Activated CD8-positive, alpha-beta memory T cell treated with anti-CD3 and anti-CD28 coated beads, Interleukin-2, amount 10 ng/mL, durations not matched to agents 7 days and 5 days (primary cell): ENCODE measurements at regions of chr9 and their contacts with region 1.

Region 1: DNA sequence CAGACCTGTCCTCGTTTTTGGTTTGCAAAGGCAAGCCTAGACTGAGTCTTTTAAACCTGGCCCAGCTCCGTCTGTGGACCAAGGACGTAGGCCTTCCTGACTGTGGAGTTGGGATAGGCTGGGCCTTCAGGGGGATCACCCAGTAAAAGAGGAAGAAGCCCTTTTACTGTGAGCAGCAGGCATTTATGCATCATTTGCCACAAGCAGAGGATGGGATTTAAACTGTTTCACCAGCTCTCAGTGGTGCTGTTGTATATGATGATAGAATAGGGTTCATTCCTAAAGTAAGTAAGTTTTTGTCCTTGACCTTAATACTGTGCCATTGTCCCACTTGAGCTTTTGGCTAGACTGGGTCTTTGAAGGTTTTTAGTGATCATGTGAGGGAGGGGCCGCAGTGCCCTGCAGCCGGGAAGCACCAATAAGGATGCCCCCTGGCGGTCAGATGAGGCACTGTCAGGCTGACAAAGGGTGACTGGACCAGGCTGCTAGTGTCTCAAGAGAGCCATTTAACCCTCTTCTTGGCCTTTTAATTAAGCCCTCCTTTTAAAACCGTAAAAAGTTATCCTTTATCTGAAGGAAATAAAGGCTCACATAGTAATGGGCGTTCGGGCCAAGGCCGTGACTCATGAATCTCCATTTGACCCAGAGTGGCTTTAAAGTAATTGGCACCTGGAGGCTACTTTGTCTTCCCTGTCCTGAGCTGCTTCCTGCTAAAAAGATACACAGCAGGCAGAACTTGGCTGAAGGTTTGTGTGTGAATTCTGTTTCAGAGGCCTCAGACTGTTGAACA is 74.0 kb downstream of the UBAP1 start:
- DNase-seq: peak; percentile 73
- ATAC-seq: peak; percentile 80
- H3K4me3 Mint-ChIP-seq: no peak overlapping the region
- H3K27ac Mint-ChIP-seq: peak overlapping the region; percentile 57
- H3K4me1 Mint-ChIP-seq: no peaks in the 10 kb centered on the region
- H3K27me3 Mint-ChIP-seq: no peaks in the 10 kb centered on the region

Region 2: DNA sequence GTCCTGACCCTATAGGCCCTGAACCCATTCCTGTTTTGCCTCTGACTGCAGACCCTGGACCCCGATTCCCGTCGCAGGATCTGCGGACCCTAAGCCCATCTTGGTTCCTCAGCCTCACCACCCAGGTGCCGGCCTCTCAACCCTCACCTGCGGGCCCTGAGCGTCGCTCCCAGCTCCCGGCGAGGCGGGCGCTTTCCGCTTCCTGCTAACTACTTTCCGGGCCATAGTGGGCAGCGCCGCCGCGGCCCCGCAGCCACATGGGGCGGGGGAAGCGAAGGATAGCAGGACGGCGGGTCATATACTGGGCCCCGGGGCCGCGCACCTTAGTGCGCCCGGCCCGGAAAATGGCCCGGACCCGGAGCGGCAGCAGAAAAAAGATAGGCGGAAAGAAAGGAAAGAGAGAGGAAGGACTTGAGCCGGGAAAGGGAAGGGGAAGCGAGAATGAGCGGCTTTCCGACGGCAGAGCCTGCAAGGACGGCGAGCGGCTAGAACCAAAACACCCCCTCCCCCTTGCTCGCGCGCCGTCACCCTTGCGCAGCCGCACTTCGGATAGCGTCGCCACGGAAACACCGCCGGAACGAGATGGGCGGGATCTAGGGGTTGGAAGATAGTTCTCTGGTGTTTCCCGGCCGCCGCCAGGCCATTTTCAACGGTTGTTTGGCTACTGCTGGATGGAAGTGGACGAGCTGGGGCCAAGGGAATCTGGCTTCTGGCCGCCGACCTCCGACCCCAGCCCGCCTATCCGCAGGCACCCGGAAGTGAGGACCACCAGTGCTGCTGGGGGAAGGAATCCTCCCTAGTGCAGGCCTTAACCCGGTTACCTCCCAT is 126.4 kb before region 1 on chr9 and contains the start of gene DCAF12:
- CTCF ChIA-PET with region 1: interaction called, 17 read pairs
- DNase-seq: peak; percentile 94
- ATAC-seq: peak; percentile 93
- H3K4me3 Mint-ChIP-seq: peak within 1 kb of the TSS; percentile 99
- H3K27ac Mint-ChIP-seq: peak within 1 kb of the TSS; percentile 96
- H3K4me1 Mint-ChIP-seq: peaks cover 39% of the 10 kb centered on the region
- H3K27me3 Mint-ChIP-seq: no peaks in the 10 kb centered on the region
- total RNA-seq, gene DCAF12: 48.4 to 58.9 TPM

Region 3: DNA sequence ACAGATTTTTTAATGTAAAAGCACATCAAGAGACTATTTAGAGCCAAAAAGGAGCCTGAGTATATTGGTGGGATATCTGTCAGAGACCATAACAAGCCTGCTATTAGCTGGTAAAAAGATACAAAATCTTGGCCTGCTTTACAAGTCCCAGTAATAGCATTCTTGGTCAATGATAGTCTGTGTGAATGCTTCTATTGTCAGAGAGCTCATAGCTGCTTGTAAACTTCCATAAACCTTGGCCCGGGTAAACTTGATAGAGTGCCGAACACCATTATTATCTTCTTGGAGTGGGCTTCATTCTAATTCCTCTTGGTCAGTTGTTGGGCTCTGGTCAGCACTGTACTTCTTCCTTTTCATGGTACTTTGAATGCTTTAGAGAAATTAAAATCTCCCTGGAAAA is 10.0 kb before region 1 on chr9:
- CTCF ChIA-PET with region 1: interaction called, 12 read pairs
- DNase-seq: no peak
- ATAC-seq: no peak
- H3K4me3 Mint-ChIP-seq: no peak overlapping the region
- H3K27ac Mint-ChIP-seq: no peak overlapping the region
- H3K4me1 Mint-ChIP-seq: no peaks in the 10 kb centered on the region
- H3K27me3 Mint-ChIP-seq: no peaks in the 10 kb centered on the region

Region 4: DNA sequence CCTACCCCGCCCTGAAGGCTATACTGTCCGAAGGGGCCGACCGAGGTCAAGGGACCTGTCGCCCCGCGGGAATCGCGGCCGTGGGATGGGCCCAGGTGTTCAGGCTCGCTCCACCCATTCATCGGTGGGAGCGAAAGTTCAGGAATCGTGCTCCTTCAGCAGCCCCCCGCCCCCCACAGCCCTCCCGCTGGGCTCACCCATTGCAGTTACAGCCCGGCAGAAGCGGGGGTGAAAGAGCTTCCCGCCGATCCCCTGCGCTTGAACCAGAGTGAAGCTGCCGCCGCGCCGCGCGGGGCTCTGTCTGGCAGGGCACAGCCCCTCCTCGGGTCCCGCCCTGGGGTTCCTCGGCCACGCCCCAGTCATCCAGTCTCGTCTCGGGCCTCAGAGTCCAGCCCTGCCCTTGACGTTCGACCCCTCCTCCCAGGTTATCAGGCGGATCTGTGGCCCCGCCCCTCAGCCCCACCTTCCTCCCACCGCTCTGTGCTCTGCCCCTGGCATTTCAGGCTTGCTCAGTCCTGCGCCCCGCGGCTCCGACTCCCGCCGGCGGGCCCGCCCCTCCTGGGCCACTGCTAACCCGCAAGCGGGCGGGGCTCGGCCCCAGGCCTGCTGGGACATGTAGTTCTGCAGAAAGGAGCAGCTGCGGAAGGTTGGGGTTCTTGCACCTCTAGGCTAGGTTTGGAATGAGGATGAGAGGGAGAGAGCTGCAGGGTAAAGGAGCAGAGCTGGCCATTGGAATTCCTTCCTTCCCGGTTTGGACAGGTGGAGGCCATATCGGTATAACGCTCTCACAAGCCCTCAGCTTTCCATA is 123.9 kb after region 1 on chr9 and contains the start of gene MYORG:
- CTCF ChIA-PET with region 1: interaction called, 23 read pairs
- DNase-seq: peak; percentile 99
- ATAC-seq: peak; percentile 82
- H3K4me3 Mint-ChIP-seq: peak within 1 kb of the TSS; percentile 83
- H3K27ac Mint-ChIP-seq: peak within 1 kb of the TSS; percentile 82
- H3K4me1 Mint-ChIP-seq: peaks cover 40% of the 10 kb centered on the region
- H3K27me3 Mint-ChIP-seq: peaks cover 4% of the 10 kb centered on the region
- total RNA-seq, gene MYORG: 3.7 to 4.2 TPM